Activated CD4-positive, alpha-beta T cell treated with anti-CD3 and anti-CD28 coated beads for 36 hours (primary cell): ENCODE measurements at regions of chr22 and their contacts with region 1.

Region 1: DNA sequence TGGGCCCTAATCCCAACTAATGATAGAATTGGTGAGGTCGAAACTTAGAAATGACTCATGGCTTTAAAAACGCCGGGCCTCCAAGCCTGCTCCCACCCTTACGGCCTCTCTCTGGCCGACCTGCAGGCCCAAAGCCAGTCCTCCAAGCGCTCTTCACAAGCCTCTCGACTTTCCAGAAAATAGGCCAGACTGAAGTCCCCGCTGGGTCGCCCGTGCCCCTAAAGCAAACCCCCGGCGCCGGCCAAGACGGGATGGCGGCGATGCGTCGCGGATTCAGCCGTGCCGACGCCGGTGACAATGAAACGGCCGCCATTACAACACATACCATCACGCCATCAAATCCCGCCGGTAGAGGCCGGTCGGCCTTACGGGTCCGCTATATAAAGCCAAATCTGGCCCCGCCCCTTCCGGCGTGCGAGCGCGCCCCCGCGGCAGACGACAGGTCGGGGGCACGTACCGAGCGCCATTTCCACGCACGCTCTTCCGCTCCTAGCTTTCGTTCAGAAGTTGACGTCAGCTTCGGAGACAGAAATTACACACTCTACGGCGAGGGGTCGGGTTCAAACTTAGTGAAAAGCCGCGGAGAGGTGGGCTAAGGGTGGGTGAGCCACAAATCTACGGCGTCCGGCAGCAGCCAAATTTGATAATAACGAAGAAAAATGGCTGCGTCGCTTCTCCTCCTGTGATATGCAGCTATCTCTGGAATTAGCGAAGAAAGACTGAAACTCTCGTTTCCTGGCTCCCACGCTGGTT is at the start of gene RPL3:
- DNase-seq: peak; percentile 98
- ATAC-seq: peak; percentile 83
- H3K4me3 Mint-ChIP-seq: peak within 1 kb of the TSS; percentile 100
- H3K27ac Mint-ChIP-seq: peak within 1 kb of the TSS; percentile 100
- H3K4me1 Mint-ChIP-seq: peaks cover 32% of the 10 kb centered on the region
- H3K27me3 Mint-ChIP-seq: no peaks in the 10 kb centered on the region
- total RNA-seq, gene RPL3: 2,519 to 3,155 TPM

Region 2: DNA sequence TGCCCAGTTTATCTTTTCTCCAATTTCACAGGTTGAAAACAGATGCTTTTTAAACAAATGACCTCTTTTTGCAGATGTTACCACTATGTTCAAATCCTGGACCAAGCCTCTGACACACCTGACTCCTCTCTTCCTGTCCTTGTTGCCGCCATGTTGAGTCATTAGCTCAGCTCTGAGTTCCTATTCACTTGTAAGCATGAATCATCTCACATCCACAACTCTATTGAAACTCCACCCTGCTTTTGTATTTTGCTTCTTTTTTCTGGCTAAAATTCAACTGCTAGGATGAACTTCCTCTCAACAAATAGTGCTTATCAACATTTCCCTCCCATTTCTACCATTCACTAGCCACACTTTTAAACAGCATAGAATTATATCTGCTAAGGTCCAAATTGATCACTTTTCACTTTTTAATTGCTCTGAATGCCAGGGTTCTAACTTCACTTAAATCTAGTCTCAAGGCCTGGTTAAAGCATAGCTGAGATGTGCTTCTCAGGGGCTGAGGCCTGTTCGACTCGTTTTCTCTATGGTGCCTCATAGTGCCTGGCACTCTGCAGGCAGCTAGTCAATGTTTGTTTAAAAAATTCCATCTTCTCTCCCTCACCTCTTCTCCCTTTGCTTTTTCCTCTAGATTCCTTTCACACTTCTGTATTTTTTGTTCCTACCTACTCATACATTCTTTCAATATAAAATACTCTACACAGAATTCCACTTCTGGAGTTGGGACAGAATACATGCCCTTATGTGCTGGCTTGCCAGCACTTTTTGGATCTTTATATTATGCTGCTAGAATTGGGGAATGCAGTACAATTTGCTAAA is 622.6 kb before region 1 on chr22:
- CTCF ChIA-PET with region 1: no interaction called
- POLR2A ChIA-PET with region 1: no interaction called
- intact Hi-C with region 1: loop called in 1 of 2 experiments (anchors 2 kb)
- DNase-seq: peak; percentile 73
- ATAC-seq: peak; percentile 74
- H3K4me3 Mint-ChIP-seq: peak overlapping the region; percentile 95
- H3K27ac Mint-ChIP-seq: peak overlapping the region; percentile 95
- H3K4me1 Mint-ChIP-seq: peaks cover 58% of the 10 kb centered on the region
- H3K27me3 Mint-ChIP-seq: no peaks in the 10 kb centered on the region

Region 3: DNA sequence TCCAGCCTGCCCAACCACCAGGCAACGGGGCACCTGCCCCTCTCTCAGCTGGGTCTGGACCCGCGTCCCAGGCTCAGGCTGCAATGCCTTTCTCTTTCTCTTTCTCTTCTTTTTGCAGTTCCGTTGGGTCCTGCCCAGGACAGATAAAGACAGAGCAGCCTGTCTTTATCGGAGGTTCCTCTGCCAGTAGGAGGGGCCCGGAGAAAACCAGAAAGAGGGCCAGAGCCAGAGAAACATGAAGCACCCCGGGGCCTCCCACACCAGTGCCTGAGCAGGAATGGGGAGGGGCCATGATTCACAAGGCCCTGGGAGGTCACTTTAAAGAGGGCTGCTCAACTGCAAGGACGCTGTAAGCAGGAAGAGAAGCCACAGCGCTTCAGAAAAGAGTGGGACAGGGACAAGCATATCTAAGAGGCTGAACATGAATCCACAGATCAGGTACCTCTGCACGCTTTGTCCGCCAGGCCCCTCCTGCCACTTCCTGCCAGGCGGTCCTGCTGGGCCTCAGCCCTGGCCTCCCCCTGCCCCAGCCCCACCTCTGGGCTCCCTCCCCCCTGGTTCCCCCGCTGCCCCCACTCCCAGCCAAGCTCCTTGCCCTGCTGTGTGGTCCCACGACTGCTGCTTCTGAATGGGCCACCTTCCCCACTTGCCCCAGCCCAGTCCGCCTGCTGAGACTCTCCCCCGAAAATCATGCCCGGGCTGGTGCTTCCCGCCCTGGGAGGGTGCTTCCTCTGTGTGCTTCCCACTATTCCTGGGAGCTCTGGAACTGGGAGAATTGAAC is 305.3 kb before region 1 on chr22 and contains the start of gene APOBEC3C:
- CTCF ChIA-PET with region 1: no interaction called
- POLR2A ChIA-PET with region 1: no interaction called
- intact Hi-C with region 1: loop called in 1 of 2 experiments (anchors 10 kb)
- DNase-seq: peak; percentile 89
- ATAC-seq: peak; percentile 96
- H3K4me3 Mint-ChIP-seq: peak within 1 kb of the TSS; percentile 93
- H3K27ac Mint-ChIP-seq: peak within 1 kb of the TSS; percentile 95
- H3K4me1 Mint-ChIP-seq: peaks cover 33% of the 10 kb centered on the region
- H3K27me3 Mint-ChIP-seq: no peaks in the 10 kb centered on the region
- total RNA-seq, gene APOBEC3C: 75.3 to 98.5 TPM

Region 4: GRCh38 chr22:39242595-39243438 is 76.6 kb before region 1 on chr22:
- CTCF ChIA-PET with region 1: interaction called, 4 read pairs
- POLR2A ChIA-PET with region 1: interaction called, 5 read pairs
- intact Hi-C with region 1: loop called in 1 of 2 experiments (anchors 2 kb)
- DNase-seq: peak; percentile 63
- ATAC-seq: peak; percentile 13
- H3K4me3 Mint-ChIP-seq: peak overlapping the region; percentile 68
- H3K27ac Mint-ChIP-seq: no peak overlapping the region
- H3K4me1 Mint-ChIP-seq: peaks cover 43% of the 10 kb centered on the region
- H3K27me3 Mint-ChIP-seq: peaks cover 23% of the 10 kb centered on the region

Region 5: GRCh38 chr22:39266398-39267030 is 52.9 kb before region 1 on chr22:
- CTCF ChIA-PET with region 1: no interaction called
- POLR2A ChIA-PET with region 1: no interaction called
- intact Hi-C with region 1: no loop called
- DNase-seq: peak; percentile 79
- ATAC-seq: peak; percentile 96
- H3K4me3 Mint-ChIP-seq: no peak overlapping the region
- H3K27ac Mint-ChIP-seq: peak overlapping the region; percentile 78
- H3K4me1 Mint-ChIP-seq: peaks cover 18% of the 10 kb centered on the region
- H3K27me3 Mint-ChIP-seq: peaks cover 7% of the 10 kb centered on the region

Region 6: GRCh38 chr22:39292561-39293098 is 26.8 kb before region 1 on chr22:
- CTCF ChIA-PET with region 1: no interaction called
- POLR2A ChIA-PET with region 1: no interaction called
- intact Hi-C with region 1: no loop called
- DNase-seq: peak; percentile 18
- ATAC-seq: peak; percentile 58
- H3K4me3 Mint-ChIP-seq: no peak overlapping the region
- H3K27ac Mint-ChIP-seq: no peak overlapping the region
- H3K4me1 Mint-ChIP-seq: peaks cover under 1% of the 10 kb centered on the region
- H3K27me3 Mint-ChIP-seq: peaks cover 2% of the 10 kb centered on the region

Region 7: GRCh38 chr22:39374191-39374590 is 54.7 kb after region 1 on chr22:
- CTCF ChIA-PET with region 1: no interaction called
- POLR2A ChIA-PET with region 1: no interaction called
- intact Hi-C with region 1: no loop called
- DNase-seq: no peak
- ATAC-seq: no peak
- H3K4me3 Mint-ChIP-seq: no peak overlapping the region
- H3K27ac Mint-ChIP-seq: no peak overlapping the region
- H3K4me1 Mint-ChIP-seq: no peaks in the 10 kb centered on the region
- H3K27me3 Mint-ChIP-seq: no peaks in the 10 kb centered on the region

Region 8: GRCh38 chr22:39388261-39389011 is 69.0 kb after region 1 on chr22:
- CTCF ChIA-PET with region 1: no interaction called
- POLR2A ChIA-PET with region 1: no interaction called
- intact Hi-C with region 1: loop called in 1 of 2 experiments (anchors 1 kb)
- DNase-seq: peak; percentile 89
- ATAC-seq: peak; percentile 95
- H3K4me3 Mint-ChIP-seq: peak overlapping the region; percentile 78
- H3K27ac Mint-ChIP-seq: peak overlapping the region; percentile 85
- H3K4me1 Mint-ChIP-seq: peaks cover 14% of the 10 kb centered on the region
- H3K27me3 Mint-ChIP-seq: no peaks in the 10 kb centered on the region

Region 9: GRCh38 chr22:39520054-39520891 is 200.8 kb after region 1 on chr22 and contains the start of gene ATF4:
- CTCF ChIA-PET with region 1: interaction called, 5 read pairs
- POLR2A ChIA-PET with region 1: interaction called, 26 read pairs
- intact Hi-C with region 1: loop called (anchors 1 kb)
- DNase-seq: peak; percentile 98
- ATAC-seq: peak; percentile 90
- H3K4me3 Mint-ChIP-seq: peak within 1 kb of the TSS; percentile 86
- H3K27ac Mint-ChIP-seq: peak within 1 kb of the TSS; percentile 99
- H3K4me1 Mint-ChIP-seq: peaks cover 67% of the 10 kb centered on the region
- H3K27me3 Mint-ChIP-seq: no peaks in the 10 kb centered on the region
- total RNA-seq, gene ATF4: 580 to 680 TPM

Region 10: DNA sequence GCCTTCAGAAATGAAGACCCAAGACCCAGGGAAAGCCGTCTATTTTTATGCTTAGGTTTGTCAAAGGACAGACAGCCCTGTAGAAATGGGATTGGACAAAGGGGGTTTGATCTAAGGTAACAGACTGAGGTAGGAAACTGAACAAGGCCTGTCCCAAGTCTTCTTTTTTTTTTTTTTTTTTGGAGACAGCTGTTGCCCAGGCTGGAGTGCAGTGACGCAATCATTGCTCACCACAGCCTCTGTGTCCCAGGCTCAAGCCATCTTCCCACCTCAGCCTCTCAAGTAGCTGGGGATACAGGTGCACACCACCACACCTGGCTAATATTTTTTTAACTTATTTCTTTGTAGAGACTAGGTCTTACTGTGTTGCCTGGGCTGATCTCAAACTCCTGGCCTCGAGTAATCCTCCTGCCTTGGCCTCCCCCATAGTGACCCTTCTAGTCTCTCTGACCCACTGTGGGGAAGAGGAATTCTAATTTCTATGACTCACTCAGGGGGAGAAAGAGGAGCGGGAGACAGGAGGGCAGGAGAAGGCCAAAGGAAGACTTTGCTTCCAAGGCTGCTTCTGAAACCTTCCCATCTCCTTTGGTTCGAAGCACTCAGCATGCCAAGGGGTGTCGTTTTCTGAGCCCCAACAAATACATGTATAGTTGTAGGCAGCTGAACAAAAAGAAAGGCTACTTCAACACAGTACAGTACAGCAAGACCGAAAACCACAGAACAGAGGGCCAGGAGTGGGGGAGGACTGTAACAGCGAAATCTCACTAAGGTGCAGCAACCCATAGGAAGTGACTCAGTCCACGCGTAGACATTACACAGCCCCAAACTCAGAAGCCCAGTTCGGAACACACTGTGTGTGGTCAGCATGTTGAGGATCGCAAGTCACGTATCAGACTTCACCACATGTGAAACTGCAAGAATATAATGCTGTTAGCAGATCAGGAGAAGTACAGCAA is 641.6 kb after region 1 on chr22:
- CTCF ChIA-PET with region 1: no interaction called
- POLR2A ChIA-PET with region 1: no interaction called
- intact Hi-C with region 1: no loop called
- DNase-seq: peak; percentile 85
- ATAC-seq: peak; percentile 95
- H3K4me3 Mint-ChIP-seq: peak overlapping the region; percentile 27
- H3K27ac Mint-ChIP-seq: peak overlapping the region; percentile 78
- H3K4me1 Mint-ChIP-seq: peaks cover 65% of the 10 kb centered on the region
- H3K27me3 Mint-ChIP-seq: no peaks in the 10 kb centered on the region